Activated naive CD4-positive, alpha-beta T cell treated with anti-CD3 and anti-CD28 coated beads, Interleukin-2, amount 10 ng/mL, durations not matched to agents 7 days and 5 days (primary cell): ENCODE measurements at regions of chr4 and their contacts with region 1.

Region 1: GRCh38 chr4:100093091-100093866 is 97.0 kb downstream of the DDIT4L start:
- DNase-seq: peak; percentile 92
- H3K4me3 Mint-ChIP-seq: no peak overlapping the region
- H3K27ac Mint-ChIP-seq: peak overlapping the region; percentile 86
- H3K4me1 Mint-ChIP-seq: peaks cover 48% of the 10 kb centered on the region
- H3K27me3 Mint-ChIP-seq: no peaks in the 10 kb centered on the region

Region 2: DNA sequence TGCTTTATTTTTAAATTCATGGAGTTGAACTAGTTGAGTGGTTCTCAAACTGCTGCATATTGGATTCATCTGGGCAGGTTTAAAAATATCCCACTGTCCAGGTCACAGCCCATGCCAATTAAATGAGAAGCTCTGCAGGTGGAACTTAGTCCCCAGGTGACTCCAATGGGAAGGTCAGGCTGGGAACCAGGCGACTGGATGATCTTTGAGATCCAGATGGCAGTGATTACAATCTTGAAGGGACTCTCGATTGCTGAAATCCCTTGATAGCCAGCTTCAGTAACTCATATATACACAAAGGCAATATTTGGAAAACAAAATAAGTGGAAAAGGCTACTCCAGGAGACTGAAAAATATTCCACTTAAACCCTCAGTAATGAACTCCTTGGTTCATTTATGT is 810.5 kb before region 1 on chr4:
- CTCF ChIA-PET with region 1: no interaction called
- DNase-seq: no peak
- H3K4me3 Mint-ChIP-seq: no peak overlapping the region
- H3K27ac Mint-ChIP-seq: no peak overlapping the region
- H3K4me1 Mint-ChIP-seq: no peaks in the 10 kb centered on the region
- H3K27me3 Mint-ChIP-seq: no peaks in the 10 kb centered on the region

Region 3: GRCh38 chr4:99816545-99817308 is 276.6 kb before region 1 on chr4 and contains the start of gene DAPP1:
- CTCF ChIA-PET with region 1: no interaction called
- DNase-seq: peak; percentile 91
- H3K4me3 Mint-ChIP-seq: peak within 1 kb of the TSS; percentile 86
- H3K27ac Mint-ChIP-seq: peak within 1 kb of the TSS; percentile 96
- H3K4me1 Mint-ChIP-seq: peaks cover 67% of the 10 kb centered on the region
- H3K27me3 Mint-ChIP-seq: no peaks in the 10 kb centered on the region

Region 4: DNA sequence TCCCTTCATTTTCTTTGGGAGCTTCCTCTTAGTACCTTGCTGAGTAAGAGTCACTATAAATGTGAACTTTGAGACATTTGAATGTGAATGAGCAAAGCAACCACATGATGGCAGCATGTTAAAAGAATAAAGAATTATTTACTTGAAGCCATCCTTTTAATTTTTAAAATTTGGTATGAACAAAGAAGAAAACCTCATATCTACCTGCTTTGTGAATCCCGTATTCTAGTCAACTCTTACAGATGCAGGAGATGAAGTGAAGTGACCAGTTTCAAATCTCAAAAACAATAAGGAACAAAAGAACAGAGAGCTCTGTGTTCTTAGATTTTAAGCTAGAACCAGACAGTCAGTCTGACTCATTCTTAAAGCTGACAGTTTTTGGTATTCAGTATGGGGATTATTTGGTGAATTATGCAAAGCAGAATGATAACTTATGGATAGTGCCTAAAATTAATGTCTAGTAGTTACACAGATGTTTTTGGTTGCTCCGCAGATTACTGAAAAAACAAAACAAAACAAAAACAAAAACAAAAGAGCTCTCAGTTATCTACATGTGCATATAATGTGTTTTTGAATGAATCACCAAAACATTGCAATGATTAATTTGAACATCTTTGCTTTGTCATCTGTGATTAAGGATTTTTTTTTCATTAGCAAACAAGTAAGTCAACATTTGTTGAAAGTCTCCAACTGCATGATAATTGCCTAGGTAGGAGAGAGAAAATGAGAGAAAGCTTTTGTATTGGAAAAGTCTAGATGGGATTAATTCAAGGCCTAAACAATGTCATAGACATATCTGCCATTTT is 95.0 kb before region 1 on chr4:
- CTCF ChIA-PET with region 1: interaction called, 10 read pairs
- DNase-seq: no peak
- H3K4me3 Mint-ChIP-seq: no peak overlapping the region
- H3K27ac Mint-ChIP-seq: no peak overlapping the region
- H3K4me1 Mint-ChIP-seq: no peaks in the 10 kb centered on the region
- H3K27me3 Mint-ChIP-seq: no peaks in the 10 kb centered on the region

Region 5: DNA sequence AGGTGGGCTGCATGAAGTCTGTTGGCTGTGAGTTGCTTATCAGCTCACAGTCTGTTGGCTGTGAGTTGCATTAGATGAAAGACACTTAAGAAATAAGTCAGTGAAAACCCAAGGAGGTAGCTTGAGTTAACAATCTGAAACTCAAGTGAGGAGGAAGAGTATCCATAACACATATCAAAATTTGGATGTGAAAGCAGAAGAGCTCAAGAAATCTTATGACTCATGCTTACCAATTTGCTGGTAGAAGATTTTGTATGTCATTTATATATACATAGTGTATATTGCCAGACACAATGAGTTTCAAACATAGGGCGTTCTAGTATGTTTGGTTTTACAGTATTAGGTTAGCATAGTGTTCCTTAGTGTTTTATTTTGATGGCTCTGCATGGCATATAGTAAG is 10.4 kb before region 1 on chr4:
- CTCF ChIA-PET with region 1: interaction called, 14 read pairs
- DNase-seq: no peak
- H3K4me3 Mint-ChIP-seq: no peak overlapping the region
- H3K27ac Mint-ChIP-seq: no peak overlapping the region
- H3K4me1 Mint-ChIP-seq: peaks cover 5% of the 10 kb centered on the region
- H3K27me3 Mint-ChIP-seq: no peaks in the 10 kb centered on the region

Region 6: DNA sequence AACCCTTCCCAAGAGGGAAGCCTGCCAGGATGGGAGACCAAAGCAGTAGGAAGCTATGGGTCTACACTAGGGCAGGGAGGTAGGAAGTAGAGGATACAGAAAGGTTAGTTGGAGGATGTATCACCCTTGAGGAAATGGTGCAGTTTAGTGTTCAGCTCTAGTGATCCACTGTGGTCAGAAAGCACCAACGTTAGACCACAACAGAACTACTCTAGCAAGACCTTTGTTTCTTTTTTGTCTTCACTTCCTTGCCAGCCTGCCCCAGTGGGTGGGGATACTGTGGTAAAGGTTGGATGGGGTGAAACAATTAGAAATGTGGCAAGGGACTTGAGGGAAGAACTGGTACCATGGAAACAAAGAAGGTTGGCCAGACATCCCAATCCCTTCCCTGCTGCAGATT is 13.7 kb after region 1 on chr4:
- CTCF ChIA-PET with region 1: interaction called, 34 read pairs
- DNase-seq: peak; percentile 61
- H3K4me3 Mint-ChIP-seq: no peak overlapping the region
- H3K27ac Mint-ChIP-seq: peak overlapping the region; percentile 75
- H3K4me1 Mint-ChIP-seq: peaks cover 31% of the 10 kb centered on the region
- H3K27me3 Mint-ChIP-seq: no peaks in the 10 kb centered on the region